Naive thymus-derived CD4-positive, alpha-beta T cell (primary cell): ENCODE measurements at regions of chr18 and their contacts with region 1.

Region 1: GRCh38 chr18:21111341-21112139 is at the start of gene ROCK1:
- DNase-seq: peak; percentile 95 to 98 (median 97)
- ATAC-seq: peak; percentile 93
- H3K4me3 ChIP-seq: peak within 1 kb of the TSS; percentile 94
- H3K4me3 Mint-ChIP-seq: peak within 1 kb of the TSS in 1 of 10 donors; percentile 98
- H3K27ac ChIP-seq: peak within 1 kb of the TSS; percentile 96
- H3K27ac Mint-ChIP-seq: peak within 1 kb of the TSS; percentile 87 to 97 (median 93)
- H3K4me1 ChIP-seq: peaks cover 31 to 34% of the 10 kb centered on the region in 2 donors
- H3K4me1 Mint-ChIP-seq: peaks cover 3 to 16% (median 7%) of the 10 kb centered on the region in 7 donors
- H3K27me3 ChIP-seq: no peaks in the 10 kb centered on the region
- H3K27me3 Mint-ChIP-seq: peaks cover 0 to 2% (median 0%) of the 10 kb centered on the region in 5 donors
- total RNA-seq, gene ROCK1: 66.2 to 97.5 (median 75.8) TPM

Region 2: DNA sequence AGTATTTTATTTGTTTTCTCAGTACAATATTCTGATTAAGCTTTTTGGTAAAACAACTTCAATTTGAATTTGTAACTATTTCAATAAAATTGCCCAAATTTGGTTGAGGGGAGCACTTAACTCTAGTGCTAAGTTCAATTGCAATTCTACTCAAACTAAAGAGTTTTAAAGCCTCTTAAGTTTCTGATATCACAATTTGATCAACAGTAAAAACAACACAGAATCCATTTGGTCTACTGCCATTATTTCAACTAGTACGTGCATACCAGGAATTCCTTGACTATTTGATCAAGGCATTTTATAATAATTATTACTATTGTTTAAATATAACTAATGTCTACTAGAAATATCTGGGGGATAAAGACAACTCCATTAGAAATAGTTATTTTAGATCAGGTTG is 150.8 kb before region 1 on chr18:
- CTCF ChIA-PET with region 1: no interaction called
- POLR2A ChIA-PET with region 1: no interaction called
- intact Hi-C with region 1: no loop called
- DNase-seq: no peak
- ATAC-seq: no peak
- H3K4me3 ChIP-seq: no peak overlapping the region
- H3K4me3 Mint-ChIP-seq: no peak overlapping the region
- H3K27ac ChIP-seq: no peak overlapping the region
- H3K27ac Mint-ChIP-seq: no peak overlapping the region
- H3K4me1 ChIP-seq: no peaks in the 10 kb centered on the region
- H3K4me1 Mint-ChIP-seq: no peaks in the 10 kb centered on the region
- H3K27me3 ChIP-seq: no peaks in the 10 kb centered on the region
- H3K27me3 Mint-ChIP-seq: no peaks in the 10 kb centered on the region

Region 3: DNA sequence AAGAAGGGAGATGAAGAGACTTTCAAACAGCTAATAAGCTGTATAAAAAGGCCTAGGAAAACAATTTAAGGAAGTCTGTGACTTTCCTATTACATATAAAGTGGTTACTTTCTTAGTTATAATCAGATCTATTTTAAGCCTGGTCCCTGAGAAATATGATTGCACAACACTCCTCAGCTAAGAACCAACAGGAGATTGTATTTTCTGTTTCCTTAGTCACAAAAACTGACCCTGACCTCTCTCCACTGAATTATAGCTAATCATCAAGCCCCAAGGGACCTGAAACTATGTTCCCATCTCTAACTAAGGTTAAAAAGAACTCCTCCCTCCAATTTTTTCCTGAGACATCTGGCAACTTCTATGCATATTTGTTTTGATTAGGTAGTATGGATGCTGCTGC is 106.8 kb before region 1 on chr18:
- CTCF ChIA-PET with region 1: no interaction called
- POLR2A ChIA-PET with region 1: interaction called, 3 read pairs
- intact Hi-C with region 1: loop called in 1 of 2 experiments (anchors 2 kb)
- DNase-seq: no peak
- ATAC-seq: no peak
- H3K4me3 ChIP-seq: no peak overlapping the region
- H3K4me3 Mint-ChIP-seq: no peak overlapping the region
- H3K27ac ChIP-seq: no peak overlapping the region
- H3K27ac Mint-ChIP-seq: peak overlapping the region in 4 of 9 donors; percentile 4 to 13 (median 6)
- H3K4me1 ChIP-seq: no peaks in the 10 kb centered on the region
- H3K4me1 Mint-ChIP-seq: peaks cover 0 to 10% (median 6%) of the 10 kb centered on the region in 7 donors
- H3K27me3 ChIP-seq: no peaks in the 10 kb centered on the region
- H3K27me3 Mint-ChIP-seq: no peaks in the 10 kb centered on the region

Region 4: DNA sequence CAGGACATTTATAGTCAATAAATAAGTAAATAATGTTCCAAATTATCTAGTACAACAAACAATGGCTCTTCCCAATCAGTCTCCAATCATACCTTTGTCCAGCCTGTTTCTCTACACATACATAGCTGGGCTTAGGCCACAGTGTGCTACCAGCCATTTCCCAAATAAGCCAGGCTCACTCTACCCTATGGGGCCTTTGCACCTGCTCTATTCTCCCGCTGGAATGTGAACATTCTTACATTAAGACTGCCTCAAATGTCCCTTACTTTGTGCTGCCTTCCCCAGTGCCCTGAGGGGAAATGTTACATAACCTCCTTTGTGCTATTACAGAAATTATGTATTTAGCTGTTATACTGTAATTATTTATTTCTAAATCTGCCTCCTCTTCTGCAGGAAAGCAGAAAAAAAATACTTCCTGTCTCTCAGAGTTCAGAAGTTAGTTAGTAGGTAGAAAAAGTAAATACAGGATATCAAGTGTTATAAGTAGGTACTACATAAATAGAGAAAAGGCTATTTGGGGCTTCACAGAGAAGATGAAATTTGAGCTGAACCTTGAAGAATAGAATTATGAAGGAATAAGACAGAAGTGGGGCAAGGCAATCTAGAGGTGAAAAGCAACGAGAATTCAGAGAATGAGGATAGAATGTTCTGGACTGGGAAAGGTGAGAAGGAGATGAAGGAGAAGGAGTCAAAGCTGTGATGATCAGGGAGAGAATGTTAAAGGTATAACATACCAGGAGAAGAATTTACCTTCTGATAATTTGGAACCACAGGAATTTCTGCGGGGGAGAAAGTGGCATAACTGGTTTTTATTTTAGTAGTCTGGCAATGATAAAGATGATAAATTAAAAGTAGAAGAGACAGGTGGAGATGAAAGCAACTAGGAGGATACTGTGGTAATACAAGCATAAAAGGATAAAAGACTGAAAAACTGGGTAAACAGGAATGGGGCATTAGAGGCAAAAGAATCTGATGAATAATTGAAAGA is 36.9 kb before region 1 on chr18:
- CTCF ChIA-PET with region 1: no interaction called
- POLR2A ChIA-PET with region 1: interaction called, 3 read pairs
- intact Hi-C with region 1: loop called (anchors 1 to 5 kb)
- DNase-seq: peak in 3 of 9 donors; percentile 4 to 15 (median 9)
- ATAC-seq: peak; percentile 31
- H3K4me3 ChIP-seq: no peak overlapping the region
- H3K4me3 Mint-ChIP-seq: peak overlapping the region; percentile 15 to 84 (median 71)
- H3K27ac ChIP-seq: no peak overlapping the region
- H3K27ac Mint-ChIP-seq: peak overlapping the region in 8 of 9 donors; percentile 28 to 83 (median 61)
- H3K4me1 ChIP-seq: peaks cover 21 to 35% of the 10 kb centered on the region in 2 donors
- H3K4me1 Mint-ChIP-seq: peaks cover 31 to 89% (median 81%) of the 10 kb centered on the region in 7 donors
- H3K27me3 ChIP-seq: no peaks in the 10 kb centered on the region
- H3K27me3 Mint-ChIP-seq: no peaks in the 10 kb centered on the region

Region 5: GRCh38 chr18:21134898-21135297 is 23.4 kb after region 1 on chr18:
- CTCF ChIA-PET with region 1: interaction called, 4 read pairs
- POLR2A ChIA-PET with region 1: no interaction called
- intact Hi-C with region 1: loop called in 1 of 2 experiments (anchors 1 kb)
- DNase-seq: peak in 7 of 9 donors; percentile 17 to 56 (median 27)
- ATAC-seq: peak; percentile 52
- H3K4me3 ChIP-seq: no peak overlapping the region
- H3K4me3 Mint-ChIP-seq: no peak overlapping the region
- H3K27ac ChIP-seq: no peak overlapping the region
- H3K27ac Mint-ChIP-seq: no peak overlapping the region
- H3K4me1 ChIP-seq: no peaks in the 10 kb centered on the region
- H3K4me1 Mint-ChIP-seq: peaks cover 0 to 4% (median 0%) of the 10 kb centered on the region in 7 donors
- H3K27me3 ChIP-seq: no peaks in the 10 kb centered on the region
- H3K27me3 Mint-ChIP-seq: peaks cover 0 to 2% (median 0%) of the 10 kb centered on the region in 5 donors

Region 6: DNA sequence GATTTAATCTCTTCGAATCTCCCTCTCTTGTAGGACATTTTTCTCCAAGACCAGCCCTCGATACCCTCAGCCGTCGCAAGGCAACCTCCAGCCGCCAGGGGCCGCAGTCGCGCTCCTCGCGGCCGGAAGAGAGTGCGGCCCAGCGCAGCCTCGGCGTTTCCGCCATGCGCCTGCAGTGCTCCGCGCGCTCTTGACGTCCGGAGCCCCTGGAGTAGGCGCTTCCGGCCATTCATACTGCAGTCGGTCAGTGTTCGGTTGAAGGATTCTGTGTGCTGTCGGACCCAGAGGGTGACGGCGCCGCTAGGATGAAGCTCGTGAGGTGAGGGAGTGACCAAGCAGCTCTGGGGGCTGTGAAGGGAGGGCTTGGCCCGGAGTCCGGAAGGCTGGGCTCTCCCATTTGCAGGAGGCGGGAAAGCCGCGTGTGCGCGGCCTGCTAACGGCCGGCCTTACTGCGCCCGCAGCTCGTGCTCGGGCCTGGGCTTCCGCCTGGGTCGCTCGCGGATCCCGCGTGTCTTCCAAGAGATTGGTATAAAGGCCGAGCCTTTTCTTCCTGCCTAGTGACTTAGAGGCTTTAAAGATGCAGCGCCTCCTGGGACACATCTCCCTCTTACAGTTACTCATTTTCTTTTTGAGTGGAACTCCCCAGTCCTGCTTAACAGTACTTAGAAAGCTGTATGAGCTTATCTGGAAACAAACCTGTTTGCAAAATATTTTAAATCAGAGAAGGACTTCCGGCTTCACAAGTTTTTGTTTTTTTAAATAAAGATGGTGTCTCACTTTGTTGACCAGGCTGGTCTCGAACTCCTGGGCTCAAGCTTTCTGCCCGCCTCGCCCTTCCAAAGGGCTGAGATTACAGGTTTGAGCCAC is 500.8 kb after region 1 on chr18 and contains the start of gene SNRPD1:
- CTCF ChIA-PET with region 1: no interaction called
- POLR2A ChIA-PET with region 1: no interaction called
- intact Hi-C with region 1: loop called in 1 of 2 experiments (anchors 1 kb)
- DNase-seq: peak; percentile 75 to 95 (median 87)
- ATAC-seq: peak; percentile 100
- H3K4me3 ChIP-seq: peak within 1 kb of the TSS; percentile 99
- H3K4me3 Mint-ChIP-seq: peak within 1 kb of the TSS; percentile 90 to 100 (median 96)
- H3K27ac ChIP-seq: peak within 1 kb of the TSS; percentile 95
- H3K27ac Mint-ChIP-seq: peak within 1 kb of the TSS; percentile 91 to 99 (median 98)
- H3K4me1 ChIP-seq: peaks cover 14 to 21% of the 10 kb centered on the region in 2 donors
- H3K4me1 Mint-ChIP-seq: peaks cover 20 to 56% (median 46%) of the 10 kb centered on the region in 7 donors
- H3K27me3 ChIP-seq: no peaks in the 10 kb centered on the region
- H3K27me3 Mint-ChIP-seq: no peaks in the 10 kb centered on the region
- total RNA-seq, gene SNRPD1: 21.9 to 83.4 (median 26.5) TPM

Region 7: GRCh38 chr18:21760321-21760720 is 648.8 kb after region 1 on chr18:
- CTCF ChIA-PET with region 1: no interaction called
- POLR2A ChIA-PET with region 1: no interaction called
- intact Hi-C with region 1: no loop called
- DNase-seq: no peak
- ATAC-seq: no peak
- H3K4me3 ChIP-seq: no peak overlapping the region
- H3K4me3 Mint-ChIP-seq: no peak overlapping the region
- H3K27ac ChIP-seq: no peak overlapping the region
- H3K27ac Mint-ChIP-seq: no peak overlapping the region
- H3K4me1 ChIP-seq: peaks cover 0 to 3% of the 10 kb centered on the region in 2 donors
- H3K4me1 Mint-ChIP-seq: peaks cover 0 to 36% (median 18%) of the 10 kb centered on the region in 7 donors
- H3K27me3 ChIP-seq: no peaks in the 10 kb centered on the region
- H3K27me3 Mint-ChIP-seq: no peaks in the 10 kb centered on the region